ENCODE measurements at regions of chr5 and their contacts with region 1.

Region 1: GRCh38 chr5:173615884-173616576 is 420 bp downstream of the BOD1 start:
- DNase-seq: peak; percentile 61
- H3K4me3 Mint-ChIP-seq: peak overlapping the region; percentile 90
- H3K27ac Mint-ChIP-seq: peak overlapping the region; percentile 88
- H3K4me1 Mint-ChIP-seq: peaks cover 31% of the 10 kb centered on the region
- H3K27me3 Mint-ChIP-seq: no peaks in the 10 kb centered on the region

Region 2: DNA sequence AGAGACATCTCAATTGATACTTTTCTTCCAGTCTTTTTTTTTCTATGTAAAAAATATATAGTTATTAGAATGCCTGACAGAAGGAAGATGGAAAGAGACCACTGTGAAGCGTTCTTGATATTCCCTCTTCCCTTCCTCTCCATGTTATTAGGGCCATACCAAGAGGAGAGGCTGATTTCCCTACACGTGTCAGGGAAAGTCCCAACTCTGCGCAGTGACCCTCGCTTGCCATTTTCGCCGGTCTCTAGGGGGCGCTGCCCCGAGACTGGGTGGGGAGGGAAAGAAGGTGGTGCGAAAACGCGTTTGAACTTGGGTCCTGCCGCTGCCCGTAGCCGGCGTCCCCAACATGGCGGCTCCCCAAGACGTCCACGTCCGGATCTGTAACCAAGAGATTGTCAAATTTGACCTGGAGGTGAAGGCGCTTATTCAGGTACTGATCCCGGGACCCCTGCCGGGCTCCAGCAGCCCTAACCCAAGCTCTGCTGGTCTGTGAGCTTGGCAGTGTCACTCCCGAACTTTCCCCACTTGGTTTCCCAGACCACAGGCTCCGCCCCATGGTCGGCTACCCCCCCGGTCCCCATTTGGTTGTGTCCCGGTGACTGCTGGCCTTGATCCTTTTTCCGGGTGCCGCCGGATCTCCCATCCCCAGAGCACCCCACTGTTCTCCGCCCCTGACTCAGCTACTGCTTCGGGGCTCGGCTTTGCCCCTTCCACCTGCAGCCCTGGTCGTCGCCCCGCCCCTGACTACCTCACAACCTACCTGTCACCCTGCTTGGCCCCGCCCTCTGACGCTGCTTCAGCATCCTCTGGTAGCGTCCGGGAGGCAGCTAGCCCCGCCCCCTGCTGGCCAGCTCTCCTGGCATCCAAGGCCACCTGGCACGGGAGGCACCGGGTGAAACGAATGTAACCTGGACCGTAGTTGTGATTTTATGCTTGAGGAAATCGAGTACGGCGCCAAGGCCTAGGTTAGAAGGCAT is 471.5 kb before region 1 on chr5 and contains the start of gene BNIP1:
- intact Hi-C with region 1: loop called (anchors 1 kb)
- DNase-seq: peak; percentile 91
- H3K4me3 Mint-ChIP-seq: peak within 1 kb of the TSS; percentile 95
- H3K27ac Mint-ChIP-seq: peak within 1 kb of the TSS; percentile 98
- H3K4me1 Mint-ChIP-seq: peaks cover 5% of the 10 kb centered on the region
- H3K27me3 Mint-ChIP-seq: no peaks in the 10 kb centered on the region
- total RNA-seq, gene BNIP1: 22.6 and 23.2 TPM in 2 replicates

Region 3: DNA sequence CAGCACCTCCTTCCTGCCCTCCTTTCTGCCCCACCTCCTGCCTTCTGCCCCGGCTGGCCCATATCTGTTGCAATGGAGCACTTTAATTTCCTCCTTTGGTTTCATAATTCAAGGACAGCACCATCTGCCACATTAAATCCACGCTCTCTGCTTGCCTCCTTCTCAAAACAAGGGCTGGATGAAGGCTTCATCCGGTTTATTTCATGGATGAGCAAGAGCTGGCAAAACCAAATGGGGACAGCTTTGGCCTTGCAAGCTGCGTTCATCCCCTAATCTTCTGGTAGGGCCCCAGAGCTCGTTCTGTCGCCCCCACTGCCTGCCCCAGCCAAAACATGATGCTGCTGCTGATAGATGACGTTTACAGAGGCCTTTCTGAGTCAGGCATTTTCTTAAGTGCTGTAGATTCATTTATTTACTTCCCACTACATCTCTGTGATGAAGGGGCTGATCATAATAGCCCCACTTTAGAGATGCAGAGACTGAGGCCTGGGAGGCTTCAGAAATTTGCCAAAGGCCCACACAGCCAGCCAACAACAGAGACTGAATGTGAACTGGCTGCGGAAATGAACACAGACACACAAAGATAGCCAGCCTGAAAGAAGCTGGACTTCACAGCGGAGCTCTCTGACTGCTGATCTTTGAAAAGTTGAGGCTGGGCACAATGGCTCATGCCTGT is 156.5 kb after region 1 on chr5:
- intact Hi-C with region 1: no loop called
- DNase-seq: no peak
- H3K4me3 Mint-ChIP-seq: no peak overlapping the region
- H3K27ac Mint-ChIP-seq: no peak overlapping the region
- H3K4me1 Mint-ChIP-seq: no peaks in the 10 kb centered on the region
- H3K27me3 Mint-ChIP-seq: no peaks in the 10 kb centered on the region

Region 4: DNA sequence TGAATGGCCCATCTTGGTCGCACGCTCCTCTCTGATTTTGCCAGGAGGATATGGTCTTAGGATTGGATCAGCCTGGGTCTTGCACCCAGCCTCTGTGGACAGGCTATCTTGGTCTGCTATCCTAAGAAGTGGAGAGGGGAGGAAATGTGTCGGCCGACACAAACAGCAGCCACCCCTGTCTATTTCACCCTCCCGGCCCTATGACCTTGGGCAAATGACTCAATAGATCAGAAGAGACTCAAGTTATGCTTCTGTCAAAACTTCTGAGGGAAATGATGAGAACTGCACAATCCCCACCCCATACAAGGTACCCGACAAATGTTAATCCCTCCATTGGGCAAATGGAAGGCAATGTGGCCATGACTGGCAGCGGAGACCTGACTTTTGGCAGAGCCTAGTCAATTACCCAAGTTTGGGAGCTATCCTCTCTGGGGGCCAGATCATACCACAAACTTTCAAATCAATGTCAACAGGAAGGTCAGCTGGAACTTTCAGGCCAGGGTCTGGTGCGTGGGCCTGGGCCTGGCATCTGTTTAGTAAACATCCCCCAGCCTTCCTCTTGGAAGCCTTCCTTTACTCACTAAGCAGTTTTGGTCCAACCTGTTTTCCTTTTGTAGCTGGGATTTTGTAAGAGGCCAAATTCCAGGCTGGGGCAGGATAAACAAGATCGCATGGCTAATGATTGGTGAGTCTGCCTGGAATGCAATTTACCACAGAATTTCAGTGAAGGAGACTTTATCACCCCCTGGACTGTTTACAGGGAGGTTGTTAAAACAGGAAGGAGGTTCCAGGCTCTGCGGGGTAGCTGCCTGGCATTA is 207.9 kb after region 1 on chr5:
- intact Hi-C with region 1: no loop called
- DNase-seq: no peak
- H3K4me3 Mint-ChIP-seq: no peak overlapping the region
- H3K27ac Mint-ChIP-seq: no peak overlapping the region
- H3K4me1 Mint-ChIP-seq: peaks cover 10% of the 10 kb centered on the region
- H3K27me3 Mint-ChIP-seq: no peaks in the 10 kb centered on the region

Region 5: GRCh38 chr5:173887610-173888472 is 271.8 kb after region 1 on chr5 and contains the start of gene CPEB4:
- intact Hi-C with region 1: loop called (anchors 1 kb)
- DNase-seq: peak; percentile 96
- H3K4me3 Mint-ChIP-seq: peak within 1 kb of the TSS; percentile 92
- H3K27ac Mint-ChIP-seq: peak within 1 kb of the TSS; percentile 99
- H3K4me1 Mint-ChIP-seq: peaks cover 61% of the 10 kb centered on the region
- H3K27me3 Mint-ChIP-seq: no peaks in the 10 kb centered on the region
- total RNA-seq, gene CPEB4: 8.1 and 12.2 TPM in 2 replicates

Region 6: DNA sequence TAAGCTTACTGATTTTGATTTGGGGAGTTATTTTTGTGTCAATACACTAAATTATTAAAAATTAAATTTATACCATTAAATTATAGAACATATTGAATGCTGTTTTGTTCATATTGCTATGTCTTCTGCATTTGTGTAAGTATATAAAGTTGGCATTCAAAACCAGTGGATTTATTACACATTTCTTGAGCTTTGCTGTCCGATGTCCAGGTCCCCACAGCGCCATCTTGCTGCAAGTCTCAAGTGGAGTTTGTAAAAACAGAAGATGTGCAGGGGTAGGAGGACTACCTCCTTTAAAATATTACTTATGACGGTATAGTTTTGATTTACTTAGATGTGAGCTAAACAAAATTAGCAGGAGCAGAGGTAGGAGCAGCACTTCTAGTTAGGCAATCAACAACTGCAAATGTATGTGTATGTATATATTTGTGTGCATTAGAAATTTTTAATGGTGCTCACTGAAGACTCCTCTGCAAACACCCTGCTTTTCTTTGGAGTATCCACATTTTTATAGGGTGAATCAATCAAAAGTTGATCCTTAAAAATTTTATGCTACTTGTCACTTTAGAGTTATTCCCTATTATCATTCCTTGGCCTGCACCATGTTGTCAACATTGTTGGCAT is 309.5 kb after region 1 on chr5:
- intact Hi-C with region 1: loop called (anchors 2 kb)
- DNase-seq: peak; percentile 20
- H3K4me3 Mint-ChIP-seq: no peak overlapping the region
- H3K27ac Mint-ChIP-seq: no peak overlapping the region
- H3K4me1 Mint-ChIP-seq: peaks cover 8% of the 10 kb centered on the region
- H3K27me3 Mint-ChIP-seq: no peaks in the 10 kb centered on the region

Region 7: GRCh38 chr5:174311531-174312269 is 695.7 kb after region 1 on chr5:
- intact Hi-C with region 1: loop called (anchors 5 kb)
- DNase-seq: peak; percentile 52
- H3K4me3 Mint-ChIP-seq: no peak overlapping the region
- H3K27ac Mint-ChIP-seq: no peak overlapping the region
- H3K4me1 Mint-ChIP-seq: peaks cover 2% of the 10 kb centered on the region
- H3K27me3 Mint-ChIP-seq: peaks cover 12% of the 10 kb centered on the region

Measured in activated T-helper 2 cell treated with anti-CD3 and anti-CD28 coated beads, Interferon-gamma antibody, Interleukin-2, Interleukin-4, amounts not matched to agents 10 μg/mL and 5 μg/mL and 100 μg/mL, durations not matched to agents 14 hours and 24 hours and 36 hours (primary cell).